ENCODE measurements at regions of chr3 and their contacts with region 1.

Region 1: GRCh38 chr3:184314363-184314699 is at the start of gene EIF4G1:
- DNase-seq: peak; percentile 92
- ATAC-seq: peak; percentile 86
- H3K4me3 Mint-ChIP-seq: peak within 1 kb of the TSS; percentile 86
- H3K27ac Mint-ChIP-seq: peak within 1 kb of the TSS; percentile 88
- H3K4me1 Mint-ChIP-seq: peaks cover 28% of the 10 kb centered on the region
- H3K27me3 Mint-ChIP-seq: no peaks in the 10 kb centered on the region
- CTCF ChIP-seq: no peak
- total RNA-seq, gene EIF4G1: 292 and 319 TPM in 2 replicates

Region 2: GRCh38 chr3:184335661-184336546 is 21.6 kb after region 1 on chr3:
- CTCF ChIA-PET with region 1: no interaction called
- POLR2A ChIA-PET with region 1: interaction called, 3 read pairs
- intact Hi-C with region 1: loop called (anchors 1 kb)
- DNase-seq: peak; percentile 92
- ATAC-seq: peak; percentile 79
- H3K4me3 Mint-ChIP-seq: peak overlapping the region; percentile 84
- H3K27ac Mint-ChIP-seq: peak overlapping the region; percentile 85
- H3K4me1 Mint-ChIP-seq: peaks cover 33% of the 10 kb centered on the region
- H3K27me3 Mint-ChIP-seq: peaks cover 5% of the 10 kb centered on the region
- CTCF ChIP-seq: no peak

Measured in activated B cell treated with CpG ODN at 0.5 μM for 24 hours (primary cell).